GM10248 (cell line): ENCODE measurements at regions of chr1 and their contacts with region 1.

Region 1: GRCh38 chr1:160193091-160193819 is 2.9 kb downstream of the CASQ1 start:
- DNase-seq: peak; percentile 79
- CTCF ChIP-seq: peak; percentile 98

Region 2: GRCh38 chr1:160058087-160058486 is 135.2 kb before region 1 on chr1:
- CTCF ChIA-PET with region 1: no interaction called
- POLR2A ChIA-PET with region 1: no interaction called
- DNase-seq: no peak
- CTCF ChIP-seq: peak; percentile 18

Region 3: GRCh38 chr1:160169553-160170399 is 23.5 kb before region 1 on chr1:
- CTCF ChIA-PET with region 1: interaction called, 17 read pairs
- POLR2A ChIA-PET with region 1: no interaction called
- DNase-seq: peak; percentile 46
- CTCF ChIP-seq: no peak

Region 4: DNA sequence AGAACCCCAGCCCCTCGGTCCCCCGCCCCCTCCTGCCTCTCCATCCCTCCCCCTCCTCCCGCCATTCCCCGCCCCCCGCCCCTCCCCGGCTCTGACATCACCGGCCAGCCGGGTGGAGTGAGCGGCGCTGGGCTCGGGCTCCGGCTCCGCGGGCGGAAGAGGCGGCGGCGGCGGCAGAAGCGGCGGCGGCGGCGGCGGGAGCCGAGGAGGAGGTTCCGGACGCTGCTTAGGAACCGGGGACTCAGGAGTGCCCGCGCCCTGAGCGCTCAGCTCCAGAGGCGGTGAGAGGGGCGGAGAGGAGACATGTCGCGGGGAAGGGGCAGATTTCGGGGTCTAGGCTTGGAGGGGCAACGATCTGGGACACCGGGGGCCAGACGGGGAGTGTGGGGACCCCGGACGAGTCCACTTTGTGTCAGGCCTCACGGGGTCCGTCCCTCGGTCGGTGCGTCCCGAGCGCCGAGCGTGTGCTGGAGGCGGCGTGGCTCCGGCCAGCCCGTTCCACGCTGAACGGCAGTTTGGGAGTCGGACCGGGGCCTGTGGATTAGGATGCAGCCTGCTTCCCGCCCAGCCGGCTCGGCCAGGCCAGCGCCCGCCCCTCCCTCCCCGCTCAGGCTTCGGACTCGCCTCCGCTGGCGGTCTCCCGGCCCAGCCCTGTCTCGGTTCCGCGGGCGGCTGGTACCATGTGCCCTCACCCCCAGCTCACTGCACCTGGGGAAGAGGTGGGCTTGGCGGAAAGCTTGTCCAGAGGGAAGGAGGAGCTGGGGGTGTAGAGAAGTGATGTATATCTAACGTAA is 12.2 kb after region 1 on chr1 and contains the start of gene PEA15:
- CTCF ChIA-PET with region 1: interaction called, 134 read pairs
- POLR2A ChIA-PET with region 1: no interaction called
- DNase-seq: peak; percentile 89
- CTCF ChIP-seq: no peak

Region 5: DNA sequence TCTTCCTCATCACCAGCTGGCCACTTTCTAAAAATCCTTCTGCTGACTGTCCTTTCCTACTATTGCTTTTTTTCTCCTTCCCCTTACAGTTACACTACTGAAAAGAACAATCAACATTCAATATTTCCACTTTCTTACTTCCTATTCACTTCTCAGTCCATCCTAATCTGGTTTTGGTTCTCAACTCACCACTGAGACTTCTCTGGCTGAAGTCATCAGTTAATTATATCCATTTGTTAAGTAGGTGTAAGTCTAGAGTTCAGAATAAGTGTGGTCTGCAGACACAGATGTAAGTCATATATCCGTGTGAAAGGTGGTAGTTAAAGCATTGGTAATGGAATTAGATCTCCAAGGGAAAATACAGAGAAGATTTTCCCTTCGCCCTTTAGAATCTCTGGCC is 33.4 kb after region 1 on chr1:
- CTCF ChIA-PET with region 1: interaction called, 19 read pairs
- POLR2A ChIA-PET with region 1: no interaction called
- DNase-seq: peak; percentile 52
- CTCF ChIP-seq: no peak

Region 6: GRCh38 chr1:160261893-160262794 is 68.9 kb after region 1 on chr1 and contains the start of gene DCAF8:
- CTCF ChIA-PET with region 1: interaction called, 11 read pairs
- POLR2A ChIA-PET with region 1: no interaction called
- DNase-seq: peak; percentile 95
- CTCF ChIP-seq: no peak

Region 7: DNA sequence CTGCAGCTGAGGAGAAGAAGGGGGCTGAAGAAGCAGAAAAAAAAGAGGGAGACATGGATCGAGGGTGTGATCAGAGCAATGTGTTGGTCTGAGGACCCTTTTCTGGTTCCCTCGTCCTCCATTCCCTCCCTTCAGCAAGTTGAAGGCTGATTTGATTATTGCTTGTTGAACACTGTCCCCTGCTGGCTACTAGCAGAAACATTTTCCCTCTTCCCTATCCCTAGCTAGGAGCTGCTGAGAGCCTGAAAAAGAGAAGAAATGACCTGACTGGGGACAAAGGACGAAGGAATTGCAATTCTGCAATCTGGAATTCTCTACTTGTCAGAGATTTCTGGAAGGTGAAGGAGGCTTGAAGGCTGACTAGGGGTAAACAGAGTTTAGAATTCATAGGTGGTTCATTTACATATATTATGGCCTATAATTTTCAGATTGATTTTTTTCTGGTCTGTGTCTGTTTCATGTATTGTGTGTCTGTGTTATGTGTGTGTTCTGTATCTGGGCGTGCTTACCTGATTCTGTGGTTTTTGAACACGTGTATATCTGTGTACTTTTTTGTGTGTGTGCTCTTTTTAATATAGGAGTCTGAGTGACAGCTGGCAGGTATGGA is 183.4 kb after region 1 on chr1:
- CTCF ChIA-PET with region 1: interaction called, 15 read pairs
- POLR2A ChIA-PET with region 1: interaction called, 3 read pairs
- DNase-seq: peak; percentile 73
- CTCF ChIP-seq: peak; percentile 91